Mammary epithelial cell (primary cell): ENCODE measurements at regions of chr16 and their contacts with region 1.

Region 1: GRCh38 chr16:24876231-24876630 is 30.5 kb downstream of the SLC5A11 start:
- DNase-seq: no peak
- H3K4me3 ChIP-seq: no peak overlapping the region
- H3K27ac ChIP-seq: no peak overlapping the region
- H3K4me1 ChIP-seq: no peaks in the 10 kb centered on the region
- H3K27me3 ChIP-seq: no peaks in the 10 kb centered on the region
- CTCF ChIP-seq: no peak

Region 2: GRCh38 chr16:24829153-24829552 is 47.1 kb before region 1 on chr16:
- CTCF ChIA-PET with region 1: no interaction called
- dilution Hi-C with region 1: loop called (anchors 5 kb)
- in situ Hi-C with region 1: no loop called
- intact Hi-C with region 1: no loop called
- DNase-seq: no peak
- H3K4me3 ChIP-seq: no peak overlapping the region
- H3K27ac ChIP-seq: no peak overlapping the region
- H3K4me1 ChIP-seq: peaks cover 6% of the 10 kb centered on the region
- H3K27me3 ChIP-seq: no peaks in the 10 kb centered on the region
- CTCF ChIP-seq: no peak

Region 3: GRCh38 chr16:24921229-24921628 is 45.0 kb after region 1 on chr16:
- CTCF ChIA-PET with region 1: no interaction called
- dilution Hi-C with region 1: no loop called
- in situ Hi-C with region 1: no loop called
- intact Hi-C with region 1: no loop called
- DNase-seq: no peak
- H3K4me3 ChIP-seq: no peak overlapping the region
- H3K27ac ChIP-seq: no peak overlapping the region
- H3K4me1 ChIP-seq: no peaks in the 10 kb centered on the region
- H3K27me3 ChIP-seq: no peaks in the 10 kb centered on the region
- CTCF ChIP-seq: no peak

Region 4: DNA sequence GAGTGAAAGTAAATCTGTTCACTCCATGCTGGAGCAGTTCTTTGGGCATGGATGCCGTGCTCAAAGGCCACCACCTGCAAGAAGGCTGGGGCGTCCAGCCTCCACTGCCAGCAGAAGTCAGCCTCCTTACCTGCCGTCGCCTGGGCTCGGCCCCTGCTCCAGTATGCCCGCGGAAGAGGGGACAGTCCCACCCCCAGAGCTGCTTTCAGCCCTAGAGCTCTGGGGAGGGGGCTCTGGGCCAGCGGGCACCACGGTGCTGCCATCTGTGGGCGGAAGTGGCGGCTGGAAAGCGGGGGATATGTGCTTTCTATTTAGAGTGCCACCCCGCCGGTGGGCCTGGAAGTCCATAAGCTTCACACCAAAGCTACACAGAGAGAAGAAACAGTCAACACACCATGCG is 63.0 kb after region 1 on chr16:
- CTCF ChIA-PET with region 1: no interaction called
- dilution Hi-C with region 1: loop called (anchors 5 kb)
- in situ Hi-C with region 1: no loop called
- intact Hi-C with region 1: no loop called
- DNase-seq: no peak
- H3K4me3 ChIP-seq: no peak overlapping the region
- H3K27ac ChIP-seq: no peak overlapping the region
- H3K4me1 ChIP-seq: no peaks in the 10 kb centered on the region
- H3K27me3 ChIP-seq: no peaks in the 10 kb centered on the region
- CTCF ChIP-seq: no peak

Region 5: DNA sequence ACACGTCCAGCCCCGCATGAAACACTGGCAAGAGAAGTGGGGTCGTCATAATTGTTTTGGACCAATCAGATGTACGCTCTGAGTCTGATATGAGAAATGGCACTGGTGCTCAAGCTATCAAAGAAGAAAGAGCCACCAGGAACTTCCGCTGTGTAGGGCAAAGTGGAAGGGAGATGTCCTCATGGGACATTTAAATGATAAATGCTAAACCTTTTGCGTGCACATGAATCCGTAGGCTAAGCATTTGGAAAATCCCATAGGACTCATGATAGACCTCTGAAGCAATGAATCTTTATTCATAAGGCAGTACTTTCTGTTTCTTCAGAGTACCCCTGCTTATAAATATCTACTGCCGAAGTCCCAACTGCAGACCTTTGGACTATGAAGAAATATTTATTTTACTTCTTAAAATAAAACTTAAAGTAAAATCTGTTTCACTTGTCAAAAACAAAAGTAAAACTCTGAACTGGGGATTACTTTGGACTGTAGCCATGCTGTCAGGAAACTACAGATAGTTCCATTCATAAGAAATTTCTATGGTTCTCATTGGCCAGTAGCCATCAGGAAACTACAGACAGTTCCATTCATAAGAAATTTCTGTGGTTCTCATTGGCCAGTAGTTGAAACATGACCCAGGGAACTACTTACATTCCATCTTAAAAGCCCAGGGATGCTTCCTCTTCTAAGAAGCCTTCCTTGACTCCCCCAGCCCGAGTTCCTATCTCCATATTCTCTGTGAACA is 1150.6 kb after region 1 on chr16:
- CTCF ChIA-PET with region 1: no interaction called
- dilution Hi-C with region 1: no loop called
- in situ Hi-C with region 1: no loop called
- intact Hi-C with region 1: no loop called
- DNase-seq: no peak
- H3K4me3 ChIP-seq: no peak overlapping the region
- H3K27ac ChIP-seq: no peak overlapping the region
- H3K4me1 ChIP-seq: no peaks in the 10 kb centered on the region
- H3K27me3 ChIP-seq: no peaks in the 10 kb centered on the region
- CTCF ChIP-seq: no peak